ENCODE measurements at regions of chr9 and their contacts with region 1.

Region 1: DNA sequence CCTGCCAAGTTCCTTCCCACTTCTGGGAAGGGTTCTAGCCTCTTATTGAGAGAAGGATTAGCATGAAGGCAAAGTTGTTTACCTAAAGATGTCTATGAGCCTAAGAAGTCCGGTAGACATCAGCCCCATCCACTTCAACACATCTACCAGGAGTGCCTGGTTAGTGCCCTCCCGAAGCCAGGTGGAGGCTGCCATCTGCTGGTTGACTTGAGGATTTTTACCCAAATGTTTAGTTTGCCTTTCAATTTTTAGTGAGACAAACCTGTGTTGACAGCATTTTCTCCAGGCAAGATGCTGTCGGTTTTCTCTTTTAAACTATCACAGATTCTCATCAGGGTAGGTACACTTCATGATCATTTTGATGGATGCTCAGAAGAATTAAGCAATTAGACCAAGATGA is 83.6 kb upstream of the TNFSF8 start:
- DNase-seq: peak; percentile 33 to 58 (median 52)
- H3K4me3 ChIP-seq: no peak overlapping the region
- H3K27ac ChIP-seq: no peak overlapping the region
- H3K4me1 ChIP-seq: no peaks in the 10 kb centered on the region
- H3K27me3 ChIP-seq: no peaks in the 10 kb centered on the region
- CTCF ChIP-seq: peak; percentile 29 to 51 (median 51)
- EP300 ChIP-seq: no peak
- POLR2A ChIP-seq: no peak

Region 2: GRCh38 chr9:114405294-114406034 is 608.5 kb before region 1 on chr9:
- intact Hi-C with region 1: loop called in 2 of 4 experiments (anchors 5 kb)
- DNase-seq: peak; percentile 71 to 80 (median 79)
- H3K4me3 ChIP-seq: no peak overlapping the region
- H3K27ac ChIP-seq: no peak overlapping the region
- H3K4me1 ChIP-seq: no peaks in the 10 kb centered on the region
- H3K27me3 ChIP-seq: no peaks in the 10 kb centered on the region
- CTCF ChIP-seq: peak; percentile 19 to 65 (median 63)
- EP300 ChIP-seq: no peak
- POLR2A ChIP-seq: no peak

Region 3: GRCh38 chr9:114434878-114435311 is 579.1 kb before region 1 on chr9:
- intact Hi-C with region 1: loop called in 1 of 4 experiments (anchors 10 kb)
- DNase-seq: peak in 1 of 5 donors; percentile 26
- H3K4me3 ChIP-seq: no peak overlapping the region
- H3K27ac ChIP-seq: no peak overlapping the region
- H3K4me1 ChIP-seq: no peaks in the 10 kb centered on the region
- H3K27me3 ChIP-seq: no peaks in the 10 kb centered on the region
- CTCF ChIP-seq: peak in 2 of 3 donors; percentile 41 to 50
- EP300 ChIP-seq: no peak
- POLR2A ChIP-seq: no peak

Region 4: GRCh38 chr9:116337015-116337414 is 1323.0 kb after region 1 on chr9:
- intact Hi-C with region 1: no loop called
- DNase-seq: no peak
- H3K4me3 ChIP-seq: no peak overlapping the region
- H3K27ac ChIP-seq: no peak overlapping the region
- H3K4me1 ChIP-seq: no peaks in the 10 kb centered on the region
- H3K27me3 ChIP-seq: no peaks in the 10 kb centered on the region
- CTCF ChIP-seq: no peak
- EP300 ChIP-seq: no peak
- POLR2A ChIP-seq: no peak

Measured in ovary (tissue), 10 donors.